ENCODE measurements at regions of chr20 and their contacts with region 1.

Region 1: GRCh38 chr20:43472671-43473380 is 15.1 kb downstream of the SRSF6 start:
- DNase-seq: no peak
- H3K4me3 ChIP-seq: no peak overlapping the region
- H3K27ac ChIP-seq: no peak overlapping the region
- H3K4me1 ChIP-seq: peaks cover 5% of the 10 kb centered on the region
- H3K27me3 ChIP-seq: peaks cover 5 to 29% of the 10 kb centered on the region in 2 experiments
- CTCF ChIP-seq: no peak
- POLR2A ChIP-seq: no peak

Region 2: GRCh38 chr20:43068482-43068881 is 404.3 kb before region 1 on chr20:
- CTCF ChIA-PET with region 1: no interaction called
- POLR2A ChIA-PET with region 1: no interaction called
- dilution Hi-C with region 1: no loop called
- intact Hi-C with region 1: no loop called
- DNase-seq: no peak
- H3K4me3 ChIP-seq: no peak overlapping the region
- H3K27ac ChIP-seq: no peak overlapping the region
- H3K4me1 ChIP-seq: no peaks in the 10 kb centered on the region
- H3K27me3 ChIP-seq: no peaks in the 10 kb centered on the region
- CTCF ChIP-seq: no peak
- POLR2A ChIP-seq: no peak

Region 3: DNA sequence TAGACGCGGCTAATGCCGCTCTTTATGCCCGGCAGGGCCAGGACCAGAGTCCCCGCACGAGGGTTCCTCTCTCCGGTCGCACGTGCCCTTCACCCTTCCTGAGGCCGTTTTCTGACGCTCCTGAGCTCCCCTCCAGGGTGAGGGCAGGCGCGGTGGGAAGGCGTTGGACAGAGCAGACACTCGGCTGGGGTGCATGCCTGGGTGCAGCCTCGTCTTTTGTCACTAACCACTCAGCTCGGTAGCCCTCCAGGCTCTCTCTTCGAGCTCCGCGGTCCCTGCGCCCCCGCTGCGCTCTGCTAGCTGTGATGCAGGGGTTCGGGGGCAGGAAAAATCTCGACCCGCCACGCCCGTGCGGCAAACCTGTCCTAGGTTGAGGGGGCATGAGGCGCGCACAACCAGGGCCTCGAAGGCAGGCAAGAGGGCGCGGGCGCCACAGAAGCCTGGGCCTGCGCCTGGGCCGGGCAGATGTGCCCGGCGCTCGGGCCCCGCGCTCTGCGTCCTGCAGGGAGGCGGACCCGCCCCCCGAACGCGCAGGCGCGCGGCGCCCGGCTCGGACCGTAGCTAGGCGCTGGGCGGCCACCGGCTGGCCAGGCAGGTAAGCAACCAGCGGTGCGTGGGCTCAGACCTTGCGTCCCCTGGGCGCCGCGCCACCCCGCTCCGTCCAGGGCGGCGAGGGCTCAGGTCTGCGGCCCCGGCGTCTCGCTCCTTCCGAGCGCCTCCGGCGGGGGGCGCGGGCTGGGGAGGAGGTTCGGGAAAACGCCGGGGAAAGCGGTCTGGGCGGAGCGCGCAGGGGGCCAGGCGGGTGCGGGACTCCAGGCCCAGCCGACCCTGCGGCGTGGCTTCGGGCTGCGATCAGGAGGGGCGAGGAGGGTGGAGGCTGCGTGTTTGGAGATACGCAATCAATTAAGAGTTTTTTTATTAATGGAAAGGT is 34.6 kb after region 1 on chr20 and contains the start of gene L3MBTL1:
- CTCF ChIA-PET with region 1: no interaction called
- POLR2A ChIA-PET with region 1: no interaction called
- dilution Hi-C with region 1: no loop called
- intact Hi-C with region 1: loop called (anchors 5 kb)
- DNase-seq: peak; percentile 35
- H3K4me3 ChIP-seq: peak within 1 kb of the TSS; percentile 49 to 55 (median 51)
- H3K27ac ChIP-seq: no peak within 1 kb of the TSS
- H3K4me1 ChIP-seq: peaks cover 4% of the 10 kb centered on the region
- H3K27me3 ChIP-seq: peaks cover 25 to 29% of the 10 kb centered on the region in 2 experiments
- CTCF ChIP-seq: no peak
- POLR2A ChIP-seq: no peak
- total RNA-seq, gene L3MBTL1: 7.1 and 8.2 TPM in 2 replicates

Region 4: DNA sequence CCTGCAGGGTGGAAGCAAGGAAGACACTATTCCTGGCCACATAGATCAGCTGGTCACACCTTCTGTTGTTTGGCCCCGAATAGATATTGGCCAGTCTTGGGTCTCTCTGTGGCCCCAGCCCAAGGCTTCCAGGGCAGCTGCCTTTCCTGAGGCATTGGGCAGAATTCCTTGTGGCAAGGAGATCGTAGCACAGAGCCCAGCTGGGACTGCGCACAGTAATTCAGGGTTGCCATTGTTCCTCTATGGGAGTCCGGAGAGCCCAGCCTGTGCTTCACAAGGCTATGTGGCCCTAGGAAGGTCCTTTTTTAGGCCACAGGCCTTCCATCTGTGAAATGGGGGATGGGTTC is 92.9 kb after region 1 on chr20:
- CTCF ChIA-PET with region 1: no interaction called
- POLR2A ChIA-PET with region 1: no interaction called
- dilution Hi-C with region 1: no loop called
- intact Hi-C with region 1: no loop called
- DNase-seq: no peak
- H3K4me3 ChIP-seq: no peak overlapping the region
- H3K27ac ChIP-seq: no peak overlapping the region
- H3K4me1 ChIP-seq: no peaks in the 10 kb centered on the region
- H3K27me3 ChIP-seq: no peaks in the 10 kb centered on the region
- CTCF ChIP-seq: no peak
- POLR2A ChIP-seq: no peak

Measured in endothelial cell of umbilical vein (primary cell).